GM13976 (cell line): ENCODE measurements at regions of chr5 and their contacts with region 1.

Region 1: DNA sequence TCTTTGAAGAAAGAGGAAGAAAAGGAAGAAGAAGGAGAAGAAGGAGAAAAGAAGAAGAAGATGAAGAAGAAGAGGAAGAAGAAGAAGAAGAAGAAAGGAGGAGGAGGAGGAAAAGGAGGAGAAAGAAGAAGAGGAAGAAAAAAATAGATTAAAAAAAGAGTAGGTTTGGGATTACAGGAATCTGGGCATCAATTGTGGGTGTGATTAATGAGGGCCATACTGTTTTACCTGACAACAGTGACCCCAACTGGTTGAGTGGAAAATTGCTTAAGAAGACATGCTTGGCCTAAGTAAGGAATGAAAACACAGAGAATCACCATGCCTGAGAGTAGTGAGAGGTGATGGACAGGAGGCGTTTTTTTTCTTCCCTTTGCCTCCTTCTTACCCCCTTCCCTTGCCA is 114.6 kb downstream of the FAM170A start:
- DNase-seq: peak; percentile 63
- CTCF ChIP-seq: peak; percentile 48

Region 2: GRCh38 chr5:118987988-118988865 is 755.7 kb before region 1 on chr5 and contains the start of gene DTWD2:
- in situ Hi-C with region 1: loop called (anchors 25 kb)
- DNase-seq: peak; percentile 95
- CTCF ChIP-seq: peak; percentile 98

Region 3: GRCh38 chr5:119274767-119275130 is 469.2 kb before region 1 on chr5:
- in situ Hi-C with region 1: no loop called
- DNase-seq: peak; percentile 26
- CTCF ChIP-seq: no peak

Region 4: DNA sequence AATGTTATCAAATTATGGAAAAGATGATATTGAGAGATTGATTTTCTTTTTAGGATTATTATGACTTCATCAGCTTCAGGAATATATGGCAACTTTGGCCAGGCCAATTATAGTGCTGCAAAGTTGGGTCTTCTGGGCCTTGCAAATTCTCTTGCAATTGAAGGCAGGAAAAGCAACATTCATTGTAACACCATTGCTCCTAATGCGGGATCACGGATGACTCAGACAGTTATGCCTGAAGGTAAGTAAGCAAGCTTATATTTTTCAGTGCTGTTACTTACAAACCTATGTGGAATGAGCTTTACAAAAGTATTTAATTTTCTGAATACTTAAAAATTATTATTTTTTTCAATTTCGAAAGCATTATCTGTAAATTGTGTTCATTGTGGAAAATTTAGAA is 265.1 kb before region 1 on chr5:
- in situ Hi-C with region 1: loop called (anchors 25 kb)
- DNase-seq: no peak
- CTCF ChIP-seq: no peak